GM10248 (cell line): ENCODE measurements at regions of chr14 and their contacts with region 1.

Region 1: GRCh38 chr14:54709444-54709843 is 142.5 kb downstream of the SAMD4A start:
- DNase-seq: peak; percentile 53
- CTCF ChIP-seq: no peak

Region 2: GRCh38 chr14:54722781-54723432 is 13.5 kb after region 1 on chr14:
- CTCF ChIA-PET with region 1: interaction called, 53 read pairs
- POLR2A ChIA-PET with region 1: no interaction called
- DNase-seq: peak; percentile 29
- CTCF ChIP-seq: peak; percentile 69